Right ventricle myocardium inferior (tissue), 1 donor: ENCODE measurements at regions of chr9 and their contacts with region 1.

Region 1: DNA sequence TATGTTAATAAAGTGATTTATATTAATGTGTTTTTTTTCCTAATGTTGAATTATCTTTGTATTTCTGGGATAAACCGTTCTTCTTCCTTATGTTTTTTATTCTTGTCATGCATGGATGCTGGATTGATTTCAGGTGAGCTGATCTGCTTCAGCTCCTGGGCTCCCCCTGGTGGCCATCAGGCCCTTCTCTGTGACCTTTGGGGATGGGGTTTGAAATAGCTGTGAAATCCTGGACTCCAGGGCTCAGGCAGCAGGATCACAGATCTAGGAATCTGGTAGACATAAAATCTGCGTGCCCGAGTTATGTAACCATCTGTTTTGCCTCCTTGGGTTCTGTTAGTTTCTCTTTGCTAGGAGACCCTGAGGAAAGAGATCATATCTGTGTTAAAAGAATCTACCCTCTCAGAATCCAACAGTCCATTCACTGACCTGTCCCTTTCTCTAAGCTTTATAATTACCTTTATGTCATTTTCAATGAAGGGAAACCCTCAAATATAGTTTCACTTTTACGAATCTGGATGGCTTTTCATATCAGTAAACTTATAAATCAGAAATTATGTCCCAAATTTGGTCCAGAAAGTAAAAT is 12.2 kb upstream of the OR13J1 start:
- DNase-seq: peak; percentile 90
- ATAC-seq: peak; percentile 81

Region 2: GRCh38 chr9:34145165-34145564 is 1737.2 kb before region 1 on chr9:
- intact Hi-C with region 1: no loop called
- DNase-seq: no peak
- ATAC-seq: no peak

Region 3: GRCh38 chr9:35646533-35647265 is 235.7 kb before region 1 on chr9:
- intact Hi-C with region 1: loop called (anchors 10 kb)
- DNase-seq: peak; percentile 97
- ATAC-seq: peak; percentile 97

Region 4: DNA sequence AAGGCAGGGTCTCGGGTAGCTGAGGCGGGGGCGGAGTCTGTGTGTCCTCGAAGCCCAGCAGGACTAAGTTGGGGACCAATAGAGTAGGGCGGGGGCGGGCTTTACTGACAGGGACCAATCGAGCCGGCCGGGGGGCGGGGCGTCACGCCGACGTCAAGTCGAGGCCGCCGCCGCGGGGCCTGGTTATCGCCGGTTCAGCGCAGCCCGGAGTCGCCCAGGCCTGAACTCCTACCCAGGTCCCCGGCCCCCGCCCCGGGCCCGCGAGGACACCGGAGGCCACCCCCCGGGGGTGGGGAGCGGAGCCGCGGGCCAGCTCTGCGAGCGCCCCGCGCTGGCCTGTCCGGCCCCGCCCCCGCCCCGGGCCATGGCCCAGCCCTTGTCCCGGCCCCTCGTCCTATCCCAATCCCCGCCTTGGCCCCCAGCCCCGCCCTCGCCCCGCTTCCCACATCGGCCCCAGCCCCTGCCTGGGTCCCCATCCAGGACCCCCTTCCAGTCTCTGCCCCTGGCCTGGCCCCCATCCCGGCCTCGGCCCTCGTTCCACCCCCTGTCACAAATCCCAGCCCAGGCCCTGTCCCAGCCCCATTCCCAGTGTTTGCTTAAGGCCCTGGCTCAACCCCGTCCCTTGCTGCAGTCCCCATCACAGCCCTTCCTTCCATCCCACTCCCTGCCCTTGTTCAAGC is 53.1 kb before region 1 on chr9 and contains the start of gene TMEM8B:
- intact Hi-C with region 1: loop called (anchors 1 kb)
- DNase-seq: peak; percentile 99
- ATAC-seq: peak; percentile 92
- total RNA-seq, gene TMEM8B: 13.8 TPM

Region 5: GRCh38 chr9:36190388-36191287 is 308.3 kb after region 1 on chr9 and contains the start of gene CLTA:
- intact Hi-C with region 1: no loop called
- DNase-seq: peak; percentile 97
- ATAC-seq: peak; percentile 99
- total RNA-seq, gene CLTA: 69.4 TPM